Activated T-helper 2 cell treated with anti-CD3 and anti-CD28 coated beads, Interferon-gamma antibody, Interleukin-2, Interleukin-4, amounts not matched to agents 10 μg/mL and 5 μg/mL and 100 μg/mL, durations not matched to agents 14 hours and 24 hours and 36 hours (primary cell): ENCODE measurements at regions of chr1 and their contacts with region 1.

Region 1: DNA sequence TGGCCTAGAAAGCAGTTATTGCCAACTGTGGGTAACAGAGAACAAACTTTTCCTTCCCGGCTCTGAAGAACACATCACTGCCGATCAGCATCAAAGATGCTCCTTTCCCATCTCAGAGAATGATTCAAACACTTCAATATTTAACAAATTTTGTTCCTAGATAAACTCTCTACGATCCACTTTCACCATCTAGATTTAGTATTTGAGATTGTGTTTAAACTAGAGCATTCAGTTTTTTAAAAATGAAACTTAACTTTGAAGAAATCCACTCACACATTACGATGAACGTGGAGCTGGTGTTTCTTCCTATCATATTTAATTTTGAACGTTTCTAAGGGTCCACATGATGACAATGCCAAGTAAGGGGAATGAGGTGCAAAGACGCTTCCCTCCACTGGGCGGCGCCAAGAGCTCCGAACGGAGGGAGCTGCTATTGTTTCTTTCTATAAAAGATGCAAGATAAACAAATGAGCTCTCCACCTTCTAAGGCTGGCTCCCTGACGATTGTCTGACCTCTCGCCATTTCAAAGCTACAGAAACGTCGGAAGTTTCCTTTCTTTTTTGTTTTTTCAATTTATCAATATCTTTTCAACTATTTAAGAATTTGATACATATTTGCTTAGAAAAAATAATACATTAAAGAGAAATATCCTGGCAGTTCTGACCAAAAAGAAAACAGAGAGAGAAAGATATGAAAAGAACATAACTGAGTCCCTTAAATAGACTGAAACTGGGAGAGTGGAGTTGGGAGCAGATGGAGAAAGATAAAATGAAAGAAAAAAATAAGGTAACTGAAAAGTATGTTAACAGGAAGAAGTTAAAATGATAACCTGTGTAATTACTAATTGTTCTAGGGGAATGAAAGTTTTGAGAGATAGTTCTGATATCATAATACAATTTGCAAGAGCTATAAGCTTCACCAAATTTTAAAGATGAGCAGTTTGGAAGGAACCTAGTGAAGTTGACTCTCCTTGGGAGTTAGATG is 4.4 kb upstream of the BARHL2 start:
- DNase-seq: peak; percentile 44
- H3K4me3 Mint-ChIP-seq: no peak overlapping the region
- H3K27ac Mint-ChIP-seq: no peak overlapping the region
- H3K4me1 Mint-ChIP-seq: peaks cover 24% of the 10 kb centered on the region
- H3K27me3 Mint-ChIP-seq: peaks cover 83% of the 10 kb centered on the region

Region 2: GRCh38 chr1:90834886-90835660 is 113.6 kb after region 1 on chr1:
- intact Hi-C with region 1: loop called (anchors 2 kb)
- DNase-seq: no peak
- H3K4me3 Mint-ChIP-seq: no peak overlapping the region
- H3K27ac Mint-ChIP-seq: no peak overlapping the region
- H3K4me1 Mint-ChIP-seq: peaks cover 3% of the 10 kb centered on the region
- H3K27me3 Mint-ChIP-seq: peaks cover 87% of the 10 kb centered on the region

Region 3: GRCh38 chr1:90964444-90965035 is 243.0 kb after region 1 on chr1:
- intact Hi-C with region 1: loop called (anchors 2 kb)
- DNase-seq: no peak
- H3K4me3 Mint-ChIP-seq: no peak overlapping the region
- H3K27ac Mint-ChIP-seq: no peak overlapping the region
- H3K4me1 Mint-ChIP-seq: peaks cover 12% of the 10 kb centered on the region
- H3K27me3 Mint-ChIP-seq: no peaks in the 10 kb centered on the region

Region 4: DNA sequence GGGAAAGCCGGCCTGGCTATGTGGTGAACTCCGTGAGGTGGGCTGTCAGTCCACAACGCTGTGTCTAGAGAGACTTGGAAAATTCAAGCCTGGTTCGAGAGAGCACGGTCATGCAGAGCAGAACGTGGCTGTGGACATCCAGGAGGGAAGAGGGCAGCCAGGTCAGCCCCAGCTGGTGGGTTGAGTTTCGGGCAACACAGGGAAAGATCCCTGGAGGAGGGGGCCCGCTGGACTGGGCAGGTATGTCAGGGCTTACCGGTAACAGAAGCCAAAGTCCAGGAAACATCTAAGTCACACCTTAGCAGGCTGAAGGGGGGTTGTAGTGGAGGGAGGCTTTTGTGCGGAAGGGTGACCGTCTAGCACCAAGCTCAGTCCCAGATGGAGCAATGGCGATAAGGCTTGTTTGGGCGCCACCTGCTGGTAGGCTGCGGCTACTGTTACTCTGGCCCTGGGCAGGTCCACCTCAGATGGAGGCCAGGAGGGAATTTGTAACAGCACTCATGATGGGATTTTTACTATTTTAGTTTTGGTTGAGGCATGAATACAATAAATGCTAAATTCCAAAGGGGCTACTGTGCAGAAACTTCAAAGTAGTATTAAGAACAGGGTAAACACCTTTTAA is 443.6 kb after region 1 on chr1:
- intact Hi-C with region 1: loop called (anchors 2 kb)
- DNase-seq: peak; percentile 50
- H3K4me3 Mint-ChIP-seq: no peak overlapping the region
- H3K27ac Mint-ChIP-seq: no peak overlapping the region
- H3K4me1 Mint-ChIP-seq: no peaks in the 10 kb centered on the region
- H3K27me3 Mint-ChIP-seq: no peaks in the 10 kb centered on the region

Region 5: GRCh38 chr1:91490501-91490900 is 769.0 kb after region 1 on chr1:
- intact Hi-C with region 1: no loop called
- DNase-seq: no peak
- H3K4me3 Mint-ChIP-seq: no peak overlapping the region
- H3K27ac Mint-ChIP-seq: no peak overlapping the region
- H3K4me1 Mint-ChIP-seq: peaks cover 5% of the 10 kb centered on the region
- H3K27me3 Mint-ChIP-seq: peaks cover 6% of the 10 kb centered on the region